Heart right ventricle (tissue), 16 donors: ENCODE measurements at regions of chr19 and their contacts with region 1.

Region 1: DNA sequence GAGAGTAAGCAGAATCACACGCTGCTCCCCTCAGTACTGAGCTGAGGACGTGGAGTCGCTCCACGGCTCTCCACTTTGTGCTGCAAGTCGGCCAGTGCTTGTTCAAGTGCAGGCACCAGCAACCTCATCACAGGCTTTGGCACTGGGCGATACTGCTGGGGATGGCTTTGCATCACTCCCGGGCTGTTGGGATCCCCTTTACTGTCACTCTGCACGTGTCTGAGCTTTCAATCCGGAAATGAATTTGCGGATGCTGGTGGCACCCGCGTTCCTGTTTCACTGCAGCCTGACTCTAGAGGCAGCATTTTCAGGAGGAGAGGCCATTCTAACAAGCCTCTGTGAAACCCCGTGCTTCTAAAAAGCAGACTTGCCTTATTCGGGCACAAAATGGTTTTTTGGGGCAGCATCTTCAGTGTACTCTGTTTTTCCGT is 19.1 kb downstream of the SMARCA4 start:
- DNase-seq: no peak
- ATAC-seq: no peak
- H3K4me3 ChIP-seq: no peak overlapping the region
- H3K27ac ChIP-seq: no peak overlapping the region
- H3K4me1 ChIP-seq: peaks cover 17 to 44% (median 28%) of the 10 kb centered on the region in 9 donors
- H3K27me3 ChIP-seq: no peaks in the 10 kb centered on the region
- CTCF ChIP-seq: peak in 1 of 9 donors; percentile 13

Region 2: DNA sequence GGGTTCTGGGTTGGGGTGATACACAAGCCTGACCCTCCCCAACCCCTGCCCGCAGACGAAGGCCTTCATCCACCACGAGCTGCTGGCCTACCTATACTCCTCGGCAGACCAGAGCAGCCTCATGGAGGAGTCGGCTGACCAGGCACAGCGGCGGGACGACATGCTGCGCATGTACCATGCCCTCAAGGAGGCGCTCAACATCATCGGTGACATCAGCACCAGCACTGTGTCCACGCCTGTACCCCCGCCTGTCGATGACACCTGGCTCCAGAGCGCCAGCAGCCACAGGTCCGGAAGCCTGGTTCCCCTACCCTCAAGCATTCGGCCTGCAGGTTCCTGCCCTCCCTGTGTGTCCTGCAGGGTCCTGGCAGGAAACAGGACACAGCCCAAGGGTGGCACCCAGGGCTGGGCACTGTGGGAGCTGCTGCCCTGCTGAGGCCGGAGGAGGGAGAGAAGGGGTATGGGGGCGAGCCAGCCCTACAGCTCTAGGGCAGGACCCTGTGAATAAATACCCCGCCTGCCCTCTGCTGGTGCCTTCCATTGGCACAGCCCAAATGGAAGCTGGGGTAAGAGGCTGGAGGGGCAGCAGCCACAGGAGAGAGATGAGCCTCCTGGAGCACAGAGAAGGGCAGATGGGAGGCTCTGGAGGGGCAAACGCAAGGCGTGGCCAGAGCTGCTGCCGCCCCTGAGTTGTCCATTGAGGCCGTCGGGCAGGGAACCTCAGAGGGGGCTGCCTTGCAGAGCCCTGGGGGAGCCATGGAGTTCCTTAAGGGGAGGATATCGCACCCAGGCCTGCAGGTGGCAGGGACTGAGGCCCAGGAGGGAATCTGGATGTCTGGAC is 150.8 kb before region 1 on chr19:
- intact Hi-C with region 1: no loop called
- DNase-seq: no peak
- ATAC-seq: peak in 1 of 8 donors; percentile 11
- H3K4me3 ChIP-seq: no peak overlapping the region
- H3K27ac ChIP-seq: no peak overlapping the region
- H3K4me1 ChIP-seq: no peaks in the 10 kb centered on the region
- H3K27me3 ChIP-seq: no peaks in the 10 kb centered on the region
- CTCF ChIP-seq: peak in 1 of 9 donors; percentile 24

Region 3: GRCh38 chr19:10928525-10929401 is 51.2 kb before region 1 on chr19 and contains the starts of genes TIMM29 and YIPF2:
- intact Hi-C with region 1: no loop called
- DNase-seq: peak; percentile 94 to 98
- ATAC-seq: peak; percentile 94 to 98 (median 98)
- H3K4me3 ChIP-seq: peak within 1 kb of the TSS; percentile 88 to 100 (median 98)
- H3K27ac ChIP-seq: peak within 1 kb of the TSS; percentile 65 to 93 (median 87)
- H3K4me1 ChIP-seq: peaks cover 10 to 32% (median 20%) of the 10 kb centered on the region in 9 donors
- H3K27me3 ChIP-seq: no peaks in the 10 kb centered on the region
- CTCF ChIP-seq: no peak
- total RNA-seq, gene TIMM29: 10.8 to 16.1 (median 14.5) TPM
- total RNA-seq, gene YIPF2: 13.7 to 26.0 (median 16.9) TPM

Region 4: GRCh38 chr19:10960314-10961072 is 19.5 kb before region 1 on chr19 and contains the start of gene SMARCA4:
- intact Hi-C with region 1: loop called in 1 of 10 experiments (anchors 2 kb)
- DNase-seq: peak; percentile 96 to 99
- ATAC-seq: peak; percentile 95 to 98 (median 97)
- H3K4me3 ChIP-seq: peak within 1 kb of the TSS; percentile 72 to 99 (median 90)
- H3K27ac ChIP-seq: peak within 1 kb of the TSS; percentile 90 to 99 (median 95)
- H3K4me1 ChIP-seq: peaks cover 0 to 28% (median 17%) of the 10 kb centered on the region in 9 donors
- H3K27me3 ChIP-seq: no peaks in the 10 kb centered on the region
- CTCF ChIP-seq: no peak
- total RNA-seq, gene SMARCA4: 35.2 to 54.4 (median 42.2) TPM

Region 5: GRCh38 chr19:11035441-11036377 is 55.7 kb after region 1 on chr19:
- intact Hi-C with region 1: no loop called
- DNase-seq: peak; percentile 91 to 92
- ATAC-seq: peak; percentile 92 to 97 (median 94)
- H3K4me3 ChIP-seq: no peak overlapping the region
- H3K27ac ChIP-seq: peak overlapping the region in 5 of 10 donors; percentile 10 to 53 (median 47)
- H3K4me1 ChIP-seq: peaks cover 0 to 13% (median 11%) of the 10 kb centered on the region in 9 donors
- H3K27me3 ChIP-seq: no peaks in the 10 kb centered on the region
- CTCF ChIP-seq: peak; percentile 63 to 95 (median 89)

Region 6: DNA sequence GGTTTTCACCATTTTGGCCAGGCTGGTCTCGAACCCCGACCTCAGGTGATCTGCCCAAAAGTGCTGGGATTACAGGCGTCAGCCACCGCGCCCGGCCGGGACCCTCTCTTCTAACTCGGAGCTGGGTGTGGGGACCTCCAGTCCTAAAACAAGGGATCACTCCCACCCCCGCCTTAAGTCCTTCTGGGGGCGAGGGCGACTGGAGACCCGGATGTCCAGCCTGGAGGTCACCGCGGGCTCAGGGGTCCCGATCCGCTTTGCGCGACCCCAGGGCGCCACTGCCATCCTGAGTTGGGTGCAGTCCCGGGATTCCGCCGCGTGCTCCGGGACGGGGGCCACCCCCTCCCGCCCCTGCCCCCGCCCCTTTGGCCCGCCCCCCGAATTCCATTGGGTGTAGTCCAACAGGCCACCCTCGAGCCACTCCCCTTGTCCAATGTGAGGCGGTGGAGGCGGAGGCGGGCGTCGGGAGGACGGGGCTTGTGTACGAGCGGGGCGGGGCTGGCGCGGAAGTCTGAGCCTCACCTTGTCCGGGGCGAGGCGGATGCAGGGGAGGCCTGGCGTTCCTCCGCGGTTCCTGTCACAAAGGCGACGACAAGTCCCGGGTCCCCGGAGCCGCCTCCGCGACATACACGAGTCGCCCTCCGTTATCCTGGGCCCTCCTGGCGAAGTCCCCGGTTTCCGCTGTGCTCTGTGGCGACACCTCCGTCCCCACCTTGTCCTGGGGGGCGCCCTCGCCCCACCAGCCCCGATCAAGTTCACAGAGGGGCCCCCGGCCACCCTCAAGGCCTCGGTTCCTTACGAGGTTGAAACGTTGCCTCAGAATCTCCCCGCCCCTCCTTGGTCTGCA is 110.3 kb after region 1 on chr19:
- intact Hi-C with region 1: loop called in 1 of 10 experiments (anchors 10 kb)
- DNase-seq: peak; percentile 98 to 99
- ATAC-seq: peak; percentile 91 to 97 (median 92)
- H3K4me3 ChIP-seq: peak overlapping the region; percentile 53 to 90 (median 70)
- H3K27ac ChIP-seq: peak overlapping the region; percentile 91 to 99 (median 96)
- H3K4me1 ChIP-seq: peaks cover 0 to 78% (median 58%) of the 10 kb centered on the region in 9 donors
- H3K27me3 ChIP-seq: no peaks in the 10 kb centered on the region
- CTCF ChIP-seq: no peak

Region 7: GRCh38 chr19:11137542-11138384 is 157.8 kb after region 1 on chr19:
- intact Hi-C with region 1: no loop called
- DNase-seq: peak; percentile 79 to 90
- ATAC-seq: peak; percentile 55 to 67 (median 59)
- H3K4me3 ChIP-seq: peak overlapping the region in 9 of 10 donors; percentile 4 to 46 (median 29)
- H3K27ac ChIP-seq: peak overlapping the region; percentile 84 to 97 (median 94)
- H3K4me1 ChIP-seq: peaks cover 25 to 65% (median 49%) of the 10 kb centered on the region in 9 donors
- H3K27me3 ChIP-seq: no peaks in the 10 kb centered on the region
- CTCF ChIP-seq: peak; percentile 68 to 92 (median 79)